Calu3 (cell line): ENCODE measurements at regions of chr5 and their contacts with region 1.

Region 1: DNA sequence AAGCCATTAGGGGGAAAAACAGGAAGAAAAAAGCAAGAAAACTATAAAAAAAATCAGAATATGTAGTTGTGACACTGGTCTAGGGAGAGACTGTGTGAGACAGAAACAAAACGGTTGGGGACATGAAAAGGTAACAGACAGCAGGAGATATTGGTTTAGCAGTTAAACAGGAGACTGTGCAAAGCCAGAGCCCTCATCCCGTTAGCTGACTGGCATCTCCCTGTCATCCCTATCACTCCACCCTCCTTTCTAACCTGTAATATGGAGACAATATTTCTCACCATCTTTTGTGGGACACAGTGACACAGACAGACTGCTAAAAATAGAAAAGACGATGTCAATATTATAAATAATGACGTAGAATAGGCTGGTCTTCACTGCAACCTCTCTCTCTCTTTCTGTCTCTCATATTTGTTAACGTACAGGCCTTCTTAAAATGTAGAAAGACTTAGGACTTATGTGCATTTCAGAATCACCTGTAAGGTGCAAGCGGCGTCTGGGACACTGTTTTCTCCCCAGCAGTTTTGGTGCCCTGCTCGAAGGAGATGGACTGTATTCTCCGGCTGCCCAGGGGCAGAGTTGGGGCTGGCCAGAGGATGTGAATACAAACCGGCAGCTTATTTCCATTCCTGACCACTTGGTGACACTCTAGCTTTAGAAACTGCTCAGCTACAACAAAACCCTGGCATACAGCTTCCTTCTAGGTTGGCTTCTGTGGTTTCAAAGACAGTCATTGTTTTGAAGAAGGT is 190.6 kb downstream of the MAT2B start:
- DNase-seq: peak; percentile 67
- H3K4me3 Mint-ChIP-seq: no peak overlapping the region
- H3K27ac Mint-ChIP-seq: no peak overlapping the region
- H3K4me1 Mint-ChIP-seq: peaks cover 8% of the 10 kb centered on the region
- H3K27me3 Mint-ChIP-seq: no peaks in the 10 kb centered on the region
- CTCF ChIP-seq: peak; percentile 68

Region 2: DNA sequence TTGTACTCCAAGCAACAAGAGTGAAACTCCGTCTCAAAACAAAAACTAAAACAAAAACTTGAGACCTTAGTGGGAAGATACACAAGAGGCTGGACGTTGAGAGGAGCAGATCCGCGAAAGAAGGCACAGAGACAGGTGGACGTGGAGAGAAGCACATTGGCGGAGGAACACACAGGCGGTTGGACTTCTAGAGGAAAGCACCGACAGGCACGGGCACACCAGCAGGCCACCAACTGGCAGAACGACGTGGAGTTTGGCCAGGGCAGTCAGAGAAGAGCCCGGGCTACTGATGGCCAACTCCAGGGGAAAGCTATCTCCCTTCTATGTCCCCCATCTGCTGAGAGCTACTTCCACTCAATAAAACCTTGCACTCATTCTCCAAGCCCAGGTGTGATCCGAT is 1145.8 kb before region 1 on chr5:
- CTCF ChIA-PET with region 1: no interaction called
- intact Hi-C with region 1: no loop called
- DNase-seq: no peak
- H3K4me3 Mint-ChIP-seq: no peak overlapping the region
- H3K27ac Mint-ChIP-seq: no peak overlapping the region
- H3K4me1 Mint-ChIP-seq: no peaks in the 10 kb centered on the region
- H3K27me3 Mint-ChIP-seq: no peaks in the 10 kb centered on the region
- CTCF ChIP-seq: no peak

Region 3: DNA sequence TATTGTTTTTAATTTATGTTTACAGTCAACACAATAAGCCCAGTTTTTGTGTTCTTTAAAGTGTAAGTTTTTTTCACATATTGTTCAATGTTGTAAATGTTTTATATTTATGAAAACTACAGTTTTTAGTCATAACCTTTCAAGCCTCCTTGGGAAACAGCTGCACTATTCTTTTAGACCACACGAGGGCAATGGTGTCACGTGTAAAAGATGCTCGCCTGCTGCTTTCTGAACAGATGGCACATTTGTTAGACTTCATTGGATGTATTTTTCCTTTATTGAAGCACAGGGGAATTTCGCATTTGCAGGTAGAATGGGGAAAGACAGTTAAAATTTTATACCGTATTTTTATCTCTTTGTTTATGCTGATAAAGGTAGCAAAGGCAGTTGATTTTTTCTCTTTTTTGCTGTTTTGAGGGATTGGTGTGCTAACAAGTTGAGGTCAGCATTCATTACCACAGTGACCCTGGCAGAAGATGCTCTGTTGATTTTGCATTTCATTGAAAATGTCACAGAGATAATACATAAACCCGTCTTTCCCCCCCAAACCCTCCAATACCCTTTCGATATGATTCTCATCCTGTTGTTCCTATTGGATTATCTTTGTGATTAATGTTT is 131.6 kb before region 1 on chr5:
- CTCF ChIA-PET with region 1: no interaction called
- intact Hi-C with region 1: loop called (anchors 2 kb)
- DNase-seq: peak; percentile 71
- H3K4me3 Mint-ChIP-seq: no peak overlapping the region
- H3K27ac Mint-ChIP-seq: no peak overlapping the region
- H3K4me1 Mint-ChIP-seq: no peaks in the 10 kb centered on the region
- H3K27me3 Mint-ChIP-seq: peaks cover 79% of the 10 kb centered on the region
- CTCF ChIP-seq: peak; percentile 76

Region 4: DNA sequence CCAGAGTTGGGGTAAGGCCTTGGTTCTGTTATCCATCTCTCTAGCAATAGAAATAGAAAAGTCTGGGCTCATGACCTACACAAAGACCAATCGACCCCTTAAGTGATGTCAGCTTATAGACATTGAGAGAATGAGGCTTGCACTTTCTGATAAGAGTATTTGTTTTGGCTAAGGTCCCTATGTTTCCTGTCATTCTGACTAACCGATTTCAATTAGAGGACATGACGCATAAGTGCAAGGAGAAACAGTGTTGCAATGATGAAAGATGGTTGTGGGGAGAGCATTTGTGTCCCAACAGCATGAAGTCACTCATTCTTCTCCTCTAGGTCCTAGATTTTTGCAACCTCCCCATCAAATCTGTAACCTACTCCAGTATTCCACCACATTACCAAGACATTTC is 64.5 kb after region 1 on chr5:
- CTCF ChIA-PET with region 1: no interaction called
- intact Hi-C with region 1: no loop called
- DNase-seq: peak; percentile 12
- H3K4me3 Mint-ChIP-seq: no peak overlapping the region
- H3K27ac Mint-ChIP-seq: no peak overlapping the region
- H3K4me1 Mint-ChIP-seq: peaks cover 7% of the 10 kb centered on the region
- H3K27me3 Mint-ChIP-seq: no peaks in the 10 kb centered on the region
- CTCF ChIP-seq: no peak

Region 5: GRCh38 chr5:164002628-164003027 is 306.6 kb after region 1 on chr5:
- CTCF ChIA-PET with region 1: interaction called, 3 read pairs
- intact Hi-C with region 1: loop called (anchors 2 kb)
- DNase-seq: no peak
- H3K4me3 Mint-ChIP-seq: no peak overlapping the region
- H3K27ac Mint-ChIP-seq: peak overlapping the region; percentile 36
- H3K4me1 Mint-ChIP-seq: peaks cover 10% of the 10 kb centered on the region
- H3K27me3 Mint-ChIP-seq: no peaks in the 10 kb centered on the region
- CTCF ChIP-seq: no peak

Region 6: GRCh38 chr5:164041105-164041504 is 345.1 kb after region 1 on chr5:
- CTCF ChIA-PET with region 1: no interaction called
- intact Hi-C with region 1: no loop called
- DNase-seq: no peak
- H3K4me3 Mint-ChIP-seq: no peak overlapping the region
- H3K27ac Mint-ChIP-seq: no peak overlapping the region
- H3K4me1 Mint-ChIP-seq: no peaks in the 10 kb centered on the region
- H3K27me3 Mint-ChIP-seq: no peaks in the 10 kb centered on the region
- CTCF ChIP-seq: no peak

Region 7: DNA sequence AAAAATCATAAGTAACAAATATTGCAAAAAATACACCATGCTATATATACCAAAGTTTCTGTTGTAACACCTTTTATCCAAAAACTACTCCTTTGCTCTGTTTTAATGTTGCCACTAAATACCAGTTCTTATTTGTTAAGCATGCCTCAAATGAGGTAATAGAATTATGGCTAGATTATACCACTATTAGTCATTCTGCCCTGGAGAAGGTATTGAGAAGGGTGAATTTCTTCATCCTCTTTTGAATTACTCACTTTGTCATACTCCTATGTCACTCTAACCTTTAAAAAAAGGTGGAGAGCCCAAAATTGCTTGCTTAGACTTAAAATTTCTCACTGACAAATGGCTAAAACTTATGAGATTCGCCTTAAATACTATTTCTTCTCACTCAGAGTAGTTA is 560.3 kb after region 1 on chr5:
- CTCF ChIA-PET with region 1: interaction called, 3 read pairs
- intact Hi-C with region 1: loop called (anchors 2 kb)
- DNase-seq: no peak
- H3K4me3 Mint-ChIP-seq: no peak overlapping the region
- H3K27ac Mint-ChIP-seq: no peak overlapping the region
- H3K4me1 Mint-ChIP-seq: peaks cover 12% of the 10 kb centered on the region
- H3K27me3 Mint-ChIP-seq: no peaks in the 10 kb centered on the region
- CTCF ChIP-seq: no peak

Region 8: DNA sequence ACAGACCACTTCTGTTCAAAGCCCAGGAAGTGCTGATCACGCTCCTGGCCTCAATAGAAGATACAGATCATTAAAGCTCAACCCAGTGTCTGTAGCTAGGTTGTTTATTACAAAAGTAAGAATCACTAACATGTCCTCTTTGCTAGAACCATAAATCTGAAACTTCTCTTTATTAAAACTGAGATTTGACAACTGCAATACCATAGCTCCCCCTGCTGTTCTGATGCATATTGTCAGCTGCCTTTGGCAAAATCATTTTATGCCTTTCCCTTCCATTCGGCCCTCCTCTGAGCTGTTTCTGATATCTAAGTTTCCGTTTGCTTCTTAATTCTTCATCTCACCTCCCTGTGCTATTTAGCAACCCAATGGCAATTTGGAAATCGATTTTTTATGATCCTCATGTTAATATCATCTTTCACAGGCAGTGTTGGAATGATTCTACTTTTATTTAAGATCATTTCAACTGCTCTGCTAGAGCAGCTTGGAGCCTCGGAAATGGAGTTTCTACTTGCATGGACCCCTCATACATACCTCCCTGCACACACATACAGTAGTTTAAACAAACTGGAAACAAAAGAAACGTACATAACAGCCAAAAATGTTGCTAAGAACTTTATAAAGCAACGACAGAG is 808.3 kb after region 1 on chr5:
- CTCF ChIA-PET with region 1: interaction called, 21 read pairs
- intact Hi-C with region 1: loop called (anchors 1 kb)
- DNase-seq: peak; percentile 68
- H3K4me3 Mint-ChIP-seq: peak overlapping the region; percentile 3
- H3K27ac Mint-ChIP-seq: no peak overlapping the region
- H3K4me1 Mint-ChIP-seq: peaks cover 9% of the 10 kb centered on the region
- H3K27me3 Mint-ChIP-seq: no peaks in the 10 kb centered on the region
- CTCF ChIP-seq: peak; percentile 77